Activated naive CD4-positive, alpha-beta T cell treated with anti-CD3 and anti-CD28 coated beads for 36 hours (primary cell): ENCODE measurements at regions of chr14 and their contacts with region 1.

Region 1: DNA sequence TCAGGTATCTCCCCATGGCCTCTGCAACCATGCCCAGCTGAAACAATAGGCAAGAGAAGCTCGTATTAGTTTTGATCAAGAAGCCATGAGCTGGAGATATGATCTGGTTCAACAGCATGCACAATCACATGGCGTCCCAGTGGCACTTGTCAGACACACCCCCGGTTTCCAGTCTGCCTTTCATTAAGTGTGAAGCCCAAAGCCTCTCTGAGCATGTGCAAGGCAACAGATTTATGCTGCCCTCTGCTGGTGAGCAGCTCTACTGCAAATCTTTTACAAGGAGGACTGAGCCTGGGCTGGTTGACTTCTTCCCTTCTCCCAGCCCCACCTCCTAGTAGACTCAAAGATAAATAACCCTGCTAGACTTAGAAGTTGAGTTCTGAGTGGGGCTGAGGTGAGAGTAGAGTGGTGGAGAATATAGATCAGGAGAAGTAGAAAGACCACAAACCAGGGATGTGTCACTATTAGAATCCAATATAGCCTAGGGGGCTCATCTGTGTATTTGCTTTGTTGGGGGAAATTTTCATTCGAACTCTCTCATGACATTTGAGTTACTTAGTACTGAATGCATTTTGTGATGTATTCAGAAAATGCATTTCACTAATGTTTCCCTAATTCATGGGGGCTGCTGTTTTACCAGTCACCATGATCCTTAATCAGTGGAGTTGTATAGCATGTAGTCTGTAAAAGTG is 53.7 kb upstream of the MBIP start:
- DNase-seq: peak; percentile 87
- H3K4me3 Mint-ChIP-seq: no peak overlapping the region
- H3K27ac Mint-ChIP-seq: no peak overlapping the region
- H3K4me1 Mint-ChIP-seq: no peaks in the 10 kb centered on the region
- H3K27me3 Mint-ChIP-seq: no peaks in the 10 kb centered on the region

Region 2: DNA sequence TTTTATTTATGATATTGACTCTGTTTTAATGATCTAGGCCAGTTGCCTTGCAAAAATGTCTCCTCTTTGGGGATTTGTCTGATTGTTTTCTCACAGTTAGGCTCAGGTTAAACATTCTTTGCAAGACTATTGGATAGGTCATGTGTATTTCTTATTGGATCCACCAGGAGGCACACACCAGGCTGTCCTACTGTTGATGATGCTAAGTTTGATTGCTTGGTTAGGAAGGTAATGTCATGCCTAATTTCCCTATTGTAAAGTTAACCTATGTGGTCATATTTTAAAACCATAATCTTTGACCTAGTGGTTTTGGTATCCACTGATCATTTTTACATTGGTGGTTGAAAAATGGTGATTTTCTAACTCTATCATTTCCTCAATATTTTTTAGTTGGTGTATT is 410.9 kb before region 1 on chr14:
- CTCF ChIA-PET with region 1: no interaction called
- intact Hi-C with region 1: loop called (anchors 10 kb)
- DNase-seq: no peak
- H3K4me3 Mint-ChIP-seq: no peak overlapping the region
- H3K27ac Mint-ChIP-seq: no peak overlapping the region
- H3K4me1 Mint-ChIP-seq: no peaks in the 10 kb centered on the region
- H3K27me3 Mint-ChIP-seq: no peaks in the 10 kb centered on the region

Region 3: GRCh38 chr14:36105401-36105800 is 268.7 kb before region 1 on chr14:
- CTCF ChIA-PET with region 1: interaction called, 11 read pairs
- intact Hi-C with region 1: no loop called
- DNase-seq: no peak
- H3K4me3 Mint-ChIP-seq: no peak overlapping the region
- H3K27ac Mint-ChIP-seq: no peak overlapping the region
- H3K4me1 Mint-ChIP-seq: no peaks in the 10 kb centered on the region
- H3K27me3 Mint-ChIP-seq: peaks cover 25% of the 10 kb centered on the region

Region 4: GRCh38 chr14:36241183-36241582 is 132.9 kb before region 1 on chr14:
- CTCF ChIA-PET with region 1: interaction called, 6 read pairs
- intact Hi-C with region 1: loop called (anchors 1 kb)
- DNase-seq: no peak
- H3K4me3 Mint-ChIP-seq: no peak overlapping the region
- H3K27ac Mint-ChIP-seq: no peak overlapping the region
- H3K4me1 Mint-ChIP-seq: no peaks in the 10 kb centered on the region
- H3K27me3 Mint-ChIP-seq: peaks cover 20% of the 10 kb centered on the region